ENCODE measurements at regions of chr22 and their contacts with region 1.

Region 1: GRCh38 chr22:35930933-35931332 is 97.7 kb downstream of the RBFOX2 start:
- DNase-seq: peak; percentile 43
- H3K4me3 ChIP-seq: no peak overlapping the region
- H3K27ac ChIP-seq: no peak overlapping the region
- H3K27me3 ChIP-seq: no peaks in the 10 kb centered on the region
- CTCF ChIP-seq: peak; percentile 75

Region 2: DNA sequence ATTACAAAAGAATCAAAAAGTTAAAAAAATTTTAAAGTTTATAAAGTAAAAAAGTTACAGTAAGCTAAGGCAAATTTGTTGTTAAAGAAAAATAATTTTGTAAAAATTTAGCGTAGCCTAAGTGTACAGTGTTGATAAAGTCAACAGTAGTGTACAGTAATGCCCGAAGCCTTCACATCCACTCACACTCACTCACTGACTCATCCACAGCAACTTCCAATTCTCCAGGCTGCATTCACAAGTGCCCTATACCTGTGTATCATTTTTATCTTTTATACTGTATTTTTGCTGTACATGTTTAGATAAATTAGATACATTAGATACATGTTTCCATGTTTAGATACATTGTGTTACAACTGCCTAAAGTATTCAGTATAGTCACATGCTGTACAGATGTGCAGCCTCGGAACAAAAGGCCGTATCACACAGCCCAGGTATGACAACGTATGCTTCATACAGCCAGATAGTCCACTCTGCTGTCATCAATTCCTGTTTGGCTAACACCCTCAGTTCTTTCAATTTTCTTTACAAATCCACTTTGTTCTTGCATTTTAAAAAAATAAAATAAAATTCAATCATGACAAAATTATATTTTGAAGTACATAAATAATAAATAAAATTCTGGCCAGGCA is 17.0 kb after region 1 on chr22:
- CTCF ChIA-PET with region 1: interaction called, 12 read pairs
- POLR2A ChIA-PET with region 1: no interaction called
- DNase-seq: peak; percentile 13
- H3K4me3 ChIP-seq: no peak overlapping the region
- H3K27ac ChIP-seq: no peak overlapping the region
- H3K27me3 ChIP-seq: no peaks in the 10 kb centered on the region
- CTCF ChIP-seq: no peak

Measured in AG04450 (cell line).